Esophagus squamous epithelium (tissue), 5 donors: ENCODE measurements at regions of chr12 and their contacts with region 1.

Region 1: DNA sequence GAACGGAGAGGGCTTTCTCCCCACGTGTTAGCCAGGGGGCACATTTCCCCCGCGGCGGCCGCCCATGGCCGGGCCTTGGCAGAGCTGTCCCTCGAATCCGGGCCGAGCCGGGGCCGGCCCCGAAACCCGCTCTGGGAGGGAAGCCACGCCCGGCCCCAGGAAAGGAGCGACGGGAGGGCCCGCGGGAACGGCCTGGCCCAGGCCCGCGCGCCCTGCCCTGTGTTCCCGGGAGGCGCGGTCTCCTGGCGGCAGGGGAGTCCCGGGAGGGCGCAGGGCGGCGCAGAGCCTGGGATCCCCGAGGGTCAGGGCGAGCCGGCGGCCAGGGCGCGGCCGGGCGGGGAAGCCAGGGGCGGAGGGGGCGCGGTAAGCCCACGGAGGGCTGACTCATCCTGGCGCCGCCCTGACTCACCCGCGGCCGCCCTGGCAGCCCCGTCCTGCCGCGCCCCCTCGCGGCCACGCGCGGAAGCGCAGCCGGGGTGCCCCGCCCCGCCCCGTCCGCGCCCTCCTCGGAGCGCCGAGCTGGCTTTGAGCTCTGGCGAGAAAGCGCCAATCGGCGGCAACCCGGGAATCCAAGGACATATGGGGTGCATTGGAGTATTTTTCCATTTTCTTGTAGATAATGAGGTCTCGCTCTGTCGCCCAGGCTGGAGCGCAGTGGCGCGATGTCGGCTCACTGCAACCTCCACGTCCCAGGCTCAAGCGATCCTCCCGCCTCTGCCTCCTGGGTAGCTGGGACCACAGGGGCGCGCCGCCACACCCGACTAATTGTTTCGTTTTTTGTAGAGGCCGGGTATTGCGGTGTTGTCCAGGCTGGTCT is 31.8 kb upstream of the PLEKHG6 start:
- DNase-seq: no peak
- H3K4me3 ChIP-seq: peak overlapping the region; percentile 28 to 73 (median 43)
- H3K27ac ChIP-seq: peak overlapping the region; percentile 92 to 99 (median 96)
- H3K4me1 ChIP-seq: peaks cover 34 to 71% (median 38%) of the 10 kb centered on the region in 3 donors
- H3K27me3 ChIP-seq: no peaks in the 10 kb centered on the region
- CTCF ChIP-seq: peak; percentile 65 to 100 (median 100)
- POLR2A ChIP-seq: peak in 2 of 4 donors; percentile 39

Region 2: GRCh38 chr12:5996459-5996858 is 282.2 kb before region 1 on chr12:
- intact Hi-C with region 1: no loop called
- DNase-seq: no peak
- H3K4me3 ChIP-seq: no peak overlapping the region
- H3K27ac ChIP-seq: no peak overlapping the region
- H3K4me1 ChIP-seq: peaks cover 0 to 18% (median 0%) of the 10 kb centered on the region in 3 donors
- H3K27me3 ChIP-seq: peaks cover 0 to 10% (median 0%) of the 10 kb centered on the region in 4 donors
- CTCF ChIP-seq: no peak
- POLR2A ChIP-seq: no peak

Region 3: GRCh38 chr12:6230321-6231110 is 48.1 kb before region 1 on chr12:
- intact Hi-C with region 1: loop called (anchors 5 kb)
- DNase-seq: peak; percentile 34
- H3K4me3 ChIP-seq: peak overlapping the region in 2 of 4 donors; percentile 18 to 27
- H3K27ac ChIP-seq: peak overlapping the region; percentile 91 to 98 (median 92)
- H3K4me1 ChIP-seq: peaks cover 78 to 100% (median 96%) of the 10 kb centered on the region in 3 donors
- H3K27me3 ChIP-seq: no peaks in the 10 kb centered on the region
- CTCF ChIP-seq: no peak
- POLR2A ChIP-seq: peak in 1 of 4 donors; percentile 13